ENCODE measurements at regions of chr11 and their contacts with region 1.

Region 1: DNA sequence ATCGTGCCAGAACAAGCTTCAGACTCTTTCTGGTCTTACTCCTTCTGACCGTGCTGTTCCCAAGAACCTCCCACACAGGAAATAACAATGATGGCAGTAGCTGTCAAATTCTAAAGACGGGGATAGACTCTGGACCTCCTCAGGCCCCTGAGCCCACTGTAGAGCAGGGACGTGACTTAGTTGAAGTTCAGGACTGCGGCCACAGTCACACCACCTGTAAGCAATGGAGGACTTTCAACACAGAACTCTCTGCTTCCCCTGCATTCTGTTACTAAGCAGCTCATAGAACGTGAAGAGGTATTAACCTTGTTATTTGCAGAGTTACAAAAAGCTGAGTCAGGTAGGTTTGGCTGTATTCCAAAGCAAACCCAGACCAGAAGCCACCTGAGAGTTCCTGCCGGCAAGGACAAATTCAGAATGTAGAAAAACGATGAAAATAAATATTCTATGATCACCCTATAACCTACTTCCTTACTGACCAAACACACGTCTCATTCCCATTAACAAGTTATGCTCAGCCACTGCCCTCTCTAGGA is 12.7 kb downstream of the TMEM45B start:
- DNase-seq: peak; percentile 81
- H3K4me3 Mint-ChIP-seq: peak overlapping the region; percentile 41
- H3K27ac Mint-ChIP-seq: peak overlapping the region; percentile 93
- H3K4me1 Mint-ChIP-seq: peaks cover 9% of the 10 kb centered on the region
- H3K27me3 Mint-ChIP-seq: no peaks in the 10 kb centered on the region
- CTCF ChIP-seq: no peak

Region 2: GRCh38 chr11:129846501-129847335 is 18.3 kb after region 1 on chr11:
- CTCF ChIA-PET with region 1: interaction called, 5 read pairs
- POLR2A ChIA-PET with region 1: interaction called, 11 read pairs
- intact Hi-C with region 1: loop called (anchors 1 kb)
- DNase-seq: peak; percentile 80
- H3K4me3 Mint-ChIP-seq: peak overlapping the region; percentile 56
- H3K27ac Mint-ChIP-seq: peak overlapping the region; percentile 88
- H3K4me1 Mint-ChIP-seq: peaks cover 12% of the 10 kb centered on the region
- H3K27me3 Mint-ChIP-seq: no peaks in the 10 kb centered on the region
- CTCF ChIP-seq: no peak

Region 3: DNA sequence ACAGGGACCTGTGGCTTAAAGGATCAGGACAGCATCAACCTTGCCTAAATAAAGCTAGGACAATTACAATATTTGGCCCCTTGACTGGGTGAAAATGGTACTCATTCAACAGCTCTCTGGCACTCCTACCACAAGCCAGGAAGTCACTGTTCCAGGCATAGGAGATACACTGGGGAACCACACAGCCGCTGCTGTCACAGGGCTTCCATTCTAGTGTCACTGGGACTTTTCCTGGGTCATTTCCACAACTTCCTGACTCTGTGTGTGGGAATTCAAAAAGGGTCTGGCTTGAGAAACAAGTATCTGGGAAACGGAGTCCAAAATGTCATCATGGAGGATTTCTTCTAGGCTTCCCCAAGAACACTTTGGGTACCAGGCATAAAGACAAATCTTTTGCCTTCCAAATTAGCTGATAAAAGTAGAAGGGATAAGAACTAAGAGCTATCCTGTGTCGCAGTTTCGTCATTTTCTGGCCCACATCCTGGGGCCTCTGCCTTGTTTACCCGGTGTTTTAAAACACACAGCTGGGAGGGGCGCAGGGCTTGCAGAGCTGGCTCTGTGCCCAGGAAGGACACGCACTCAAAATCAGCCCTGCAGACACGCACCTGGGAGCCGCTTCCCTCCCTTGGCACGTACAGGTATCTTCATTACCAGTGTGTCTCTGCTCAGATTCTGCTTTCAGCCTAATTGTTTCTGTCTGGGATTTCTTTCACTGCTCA is 25.3 kb after region 1 on chr11:
- CTCF ChIA-PET with region 1: interaction called, 5 read pairs
- POLR2A ChIA-PET with region 1: interaction called, 22 read pairs
- intact Hi-C with region 1: no loop called
- DNase-seq: peak; percentile 91
- H3K4me3 Mint-ChIP-seq: peak overlapping the region; percentile 2
- H3K27ac Mint-ChIP-seq: peak overlapping the region; percentile 80
- H3K4me1 Mint-ChIP-seq: peaks cover 37% of the 10 kb centered on the region
- H3K27me3 Mint-ChIP-seq: no peaks in the 10 kb centered on the region
- CTCF ChIP-seq: no peak

Region 4: GRCh38 chr11:129861702-129862113 is 33.3 kb after region 1 on chr11:
- CTCF ChIA-PET with region 1: interaction called, 3 read pairs
- POLR2A ChIA-PET with region 1: interaction called, 10 read pairs
- intact Hi-C with region 1: loop called (anchors 5 kb)
- DNase-seq: peak; percentile 89
- H3K4me3 Mint-ChIP-seq: peak overlapping the region; percentile 62
- H3K27ac Mint-ChIP-seq: peak overlapping the region; percentile 86
- H3K4me1 Mint-ChIP-seq: peaks cover 13% of the 10 kb centered on the region
- H3K27me3 Mint-ChIP-seq: no peaks in the 10 kb centered on the region
- CTCF ChIP-seq: no peak

Measured in MCF 10A (cell line).